Activated CD4-positive, alpha-beta memory T cell treated with anti-CD3 and anti-CD28 coated beads for 36 hours (primary cell): ENCODE measurements at regions of chr18 and their contacts with region 1.

Region 1: GRCh38 chr18:44758861-44759631 is 78.4 kb downstream of the SETBP1 start:
- DNase-seq: peak; percentile 78
- H3K4me3 Mint-ChIP-seq: peak overlapping the region; percentile 27
- H3K27ac Mint-ChIP-seq: peak overlapping the region; percentile 87
- H3K4me1 Mint-ChIP-seq: peaks cover 26% of the 10 kb centered on the region
- H3K27me3 Mint-ChIP-seq: peaks cover 3% of the 10 kb centered on the region

Region 2: GRCh38 chr18:44668270-44668975 is 90.6 kb before region 1 on chr18:
- CTCF ChIA-PET with region 1: no interaction called
- POLR2A ChIA-PET with region 1: no interaction called
- intact Hi-C with region 1: no loop called
- DNase-seq: no peak
- H3K4me3 Mint-ChIP-seq: no peak overlapping the region
- H3K27ac Mint-ChIP-seq: no peak overlapping the region
- H3K4me1 Mint-ChIP-seq: no peaks in the 10 kb centered on the region
- H3K27me3 Mint-ChIP-seq: peaks cover 43% of the 10 kb centered on the region

Region 3: DNA sequence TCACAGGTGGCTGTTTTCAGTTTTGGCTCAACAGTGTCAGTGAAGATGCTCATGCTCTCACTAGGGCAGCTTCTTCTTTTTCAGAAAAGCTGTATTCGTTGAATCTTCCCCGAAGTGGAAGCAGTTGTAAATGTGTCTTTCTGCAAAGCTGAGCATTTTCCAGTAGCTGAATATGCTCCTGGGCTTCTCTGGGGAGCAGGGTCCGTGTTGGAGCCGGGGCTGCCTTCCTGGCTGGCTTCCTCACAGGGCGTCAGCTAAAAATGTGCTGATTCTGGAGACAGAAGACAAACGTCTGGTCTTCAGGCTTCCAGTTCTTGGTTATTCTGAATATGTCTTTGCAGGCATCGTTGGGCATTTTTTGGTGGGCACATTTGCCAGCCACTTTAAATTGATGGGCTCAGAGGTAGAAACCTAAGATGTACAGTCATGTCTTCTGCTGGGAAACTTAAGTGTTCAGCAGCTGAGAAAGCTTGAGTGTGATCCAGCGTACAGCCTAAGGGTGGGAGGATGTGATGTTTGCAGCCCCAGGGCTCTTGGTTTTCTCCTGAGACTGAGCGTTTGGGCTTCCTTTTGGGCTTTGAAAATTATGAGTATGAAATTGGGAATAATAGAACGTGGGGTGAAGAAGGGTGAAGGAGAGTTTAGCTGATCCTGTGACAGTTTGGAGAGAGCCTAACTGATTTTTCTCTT is 59.3 kb before region 1 on chr18:
- CTCF ChIA-PET with region 1: interaction called, 3 read pairs
- POLR2A ChIA-PET with region 1: interaction called, 10 read pairs
- intact Hi-C with region 1: no loop called
- DNase-seq: no peak
- H3K4me3 Mint-ChIP-seq: no peak overlapping the region
- H3K27ac Mint-ChIP-seq: no peak overlapping the region
- H3K4me1 Mint-ChIP-seq: peaks cover 15% of the 10 kb centered on the region
- H3K27me3 Mint-ChIP-seq: peaks cover 7% of the 10 kb centered on the region

Region 4: DNA sequence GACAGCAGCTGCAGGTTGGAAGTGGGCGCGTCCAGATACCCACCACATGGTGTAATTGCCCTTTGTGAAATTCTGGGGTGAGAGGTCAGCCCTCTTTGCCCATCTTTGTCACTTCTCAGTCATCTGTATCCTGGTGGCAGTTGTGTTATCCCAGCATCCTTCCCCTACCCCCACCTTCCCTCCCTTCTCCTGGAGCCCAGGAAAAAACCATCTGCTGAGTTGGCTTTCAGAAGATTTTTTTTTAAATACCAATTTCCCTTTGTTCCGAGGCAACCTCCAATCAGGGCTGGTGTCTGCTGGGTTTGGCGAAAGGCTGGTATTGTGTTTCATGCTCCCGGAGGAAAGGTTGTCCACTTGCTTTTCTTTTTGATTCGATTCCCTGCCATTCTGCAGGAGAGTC is 43.2 kb before region 1 on chr18:
- CTCF ChIA-PET with region 1: interaction called, 5 read pairs
- POLR2A ChIA-PET with region 1: interaction called, 13 read pairs
- intact Hi-C with region 1: loop called (anchors 1 kb)
- DNase-seq: no peak
- H3K4me3 Mint-ChIP-seq: no peak overlapping the region
- H3K27ac Mint-ChIP-seq: no peak overlapping the region
- H3K4me1 Mint-ChIP-seq: peaks cover 21% of the 10 kb centered on the region
- H3K27me3 Mint-ChIP-seq: peaks cover 7% of the 10 kb centered on the region

Region 5: DNA sequence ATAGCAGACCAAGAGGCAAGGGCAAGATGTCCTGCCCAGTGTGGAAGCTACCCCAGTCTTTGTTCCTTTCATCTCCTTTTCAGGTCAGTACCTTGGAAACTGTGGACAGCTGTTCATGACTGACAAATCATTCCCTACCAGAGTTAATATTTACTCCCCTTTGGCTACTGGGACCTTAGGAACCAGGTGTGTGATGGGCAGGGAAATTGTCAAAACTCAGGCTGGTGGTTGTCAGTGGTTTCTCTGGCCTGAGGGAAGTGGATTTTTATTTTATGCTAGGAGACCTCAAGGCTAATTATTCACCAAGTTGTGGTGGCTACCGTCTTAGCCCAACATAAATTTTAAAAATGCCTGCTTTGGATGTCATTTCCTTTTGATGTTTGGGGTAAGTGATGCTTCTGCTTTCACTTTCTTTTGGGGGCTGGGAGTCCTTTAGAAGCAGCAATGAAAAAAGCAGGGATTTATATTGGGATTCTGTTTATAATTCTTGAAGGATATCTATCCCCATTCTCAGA is 40.9 kb after region 1 on chr18:
- CTCF ChIA-PET with region 1: interaction called, 4 read pairs
- POLR2A ChIA-PET with region 1: interaction called, 7 read pairs
- intact Hi-C with region 1: loop called (anchors 1 kb)
- DNase-seq: no peak
- H3K4me3 Mint-ChIP-seq: no peak overlapping the region
- H3K27ac Mint-ChIP-seq: no peak overlapping the region
- H3K4me1 Mint-ChIP-seq: peaks cover 43% of the 10 kb centered on the region
- H3K27me3 Mint-ChIP-seq: peaks cover 3% of the 10 kb centered on the region

Region 6: GRCh38 chr18:44823782-44824181 is 64.7 kb after region 1 on chr18:
- CTCF ChIA-PET with region 1: no interaction called
- POLR2A ChIA-PET with region 1: no interaction called
- intact Hi-C with region 1: loop called (anchors 1 kb)
- DNase-seq: peak; percentile 28
- H3K4me3 Mint-ChIP-seq: no peak overlapping the region
- H3K27ac Mint-ChIP-seq: no peak overlapping the region
- H3K4me1 Mint-ChIP-seq: peaks cover 16% of the 10 kb centered on the region
- H3K27me3 Mint-ChIP-seq: peaks cover 20% of the 10 kb centered on the region

Region 7: GRCh38 chr18:44887227-44887631 is 128.2 kb after region 1 on chr18:
- CTCF ChIA-PET with region 1: interaction called, 12 read pairs
- POLR2A ChIA-PET with region 1: interaction called, 13 read pairs
- intact Hi-C with region 1: loop called (anchors 1 kb)
- DNase-seq: peak; percentile 74
- H3K4me3 Mint-ChIP-seq: no peak overlapping the region
- H3K27ac Mint-ChIP-seq: peak overlapping the region; percentile 88
- H3K4me1 Mint-ChIP-seq: peaks cover 25% of the 10 kb centered on the region
- H3K27me3 Mint-ChIP-seq: peaks cover 3% of the 10 kb centered on the region

Region 8: GRCh38 chr18:44895176-44895798 is 136.2 kb after region 1 on chr18:
- CTCF ChIA-PET with region 1: interaction called, 5 read pairs
- POLR2A ChIA-PET with region 1: interaction called, 10 read pairs
- intact Hi-C with region 1: loop called (anchors 1 kb)
- DNase-seq: peak; percentile 62
- H3K4me3 Mint-ChIP-seq: no peak overlapping the region
- H3K27ac Mint-ChIP-seq: no peak overlapping the region
- H3K4me1 Mint-ChIP-seq: peaks cover 43% of the 10 kb centered on the region
- H3K27me3 Mint-ChIP-seq: no peaks in the 10 kb centered on the region